Uterus (tissue), 4 donors: ENCODE measurements at regions of chr9 and their contacts with region 1.

Region 1: GRCh38 chr9:133144137-133144903 is 19.4 kb downstream of the GBGT1 start:
- DNase-seq: peak in 1 of 2 donors; percentile 69
- H3K4me3 ChIP-seq: peak overlapping the region; percentile 29 to 44
- H3K27ac ChIP-seq: peak overlapping the region; percentile 7 to 29
- H3K4me1 ChIP-seq: peaks cover 4 to 30% of the 10 kb centered on the region in 2 donors
- H3K27me3 ChIP-seq: no peaks in the 10 kb centered on the region
- CTCF ChIP-seq: peak; percentile 97 to 99 (median 98)
- POLR2A ChIP-seq: peak in 1 of 2 donors; percentile 44

Region 2: GRCh38 chr9:133103183-133103986 is 40.9 kb before region 1 on chr9:
- intact Hi-C with region 1: loop called (anchors 5 kb)
- DNase-seq: peak; percentile 65 to 70
- H3K4me3 ChIP-seq: no peak overlapping the region
- H3K27ac ChIP-seq: no peak overlapping the region
- H3K4me1 ChIP-seq: no peaks in the 10 kb centered on the region
- H3K27me3 ChIP-seq: no peaks in the 10 kb centered on the region
- CTCF ChIP-seq: peak; percentile 95 to 99 (median 98)
- POLR2A ChIP-seq: no peak